Head of caudate nucleus (tissue), 42 donors: ENCODE measurements at regions of chr18 and their contacts with region 1.

Region 1: GRCh38 chr18:54119524-54120019 is 104.9 kb downstream of the MBD2 start:
- DNase-seq: peak in 23 of 42 donors; percentile 3 to 71 (median 35)

Region 2: DNA sequence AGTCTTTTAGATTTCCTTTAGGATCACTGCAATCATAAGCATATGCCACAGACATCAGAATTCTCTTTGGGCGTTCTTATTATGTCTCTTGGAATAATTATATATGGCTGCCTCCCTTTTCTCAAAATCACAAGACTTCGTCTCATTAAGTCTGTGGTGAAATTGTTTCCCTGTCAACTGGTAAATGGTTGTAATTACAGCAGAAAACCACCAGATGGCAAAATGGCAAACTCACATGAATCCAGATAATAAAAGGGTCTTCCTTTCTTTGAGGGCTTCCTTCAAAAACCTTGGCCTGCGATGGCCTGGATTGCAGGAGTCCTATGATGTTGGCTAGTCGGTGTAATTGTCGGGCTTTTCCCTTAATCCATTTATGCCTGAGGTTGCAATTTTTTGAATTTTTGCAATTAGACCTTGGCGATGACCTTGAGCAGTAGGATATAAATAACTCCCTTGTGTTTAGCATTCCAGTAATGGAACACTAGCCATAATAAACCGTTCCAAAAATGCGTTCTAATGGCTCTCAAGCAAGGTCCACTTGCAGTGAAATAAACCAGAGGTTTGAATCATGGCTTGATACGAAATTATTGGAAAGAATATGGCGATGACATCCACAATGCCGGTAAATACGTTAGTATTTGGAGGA is 551.5 kb before region 1 on chr18:
- intact Hi-C with region 1: loop called (anchors 10 kb)
- DNase-seq: peak in 11 of 42 donors; percentile 2 to 53 (median 9)

Region 3: GRCh38 chr18:53698907-53699306 is 420.7 kb before region 1 on chr18:
- intact Hi-C with region 1: loop called (anchors 10 kb)
- DNase-seq: peak in 40 of 42 donors; percentile 15 to 82 (median 51)

Region 4: DNA sequence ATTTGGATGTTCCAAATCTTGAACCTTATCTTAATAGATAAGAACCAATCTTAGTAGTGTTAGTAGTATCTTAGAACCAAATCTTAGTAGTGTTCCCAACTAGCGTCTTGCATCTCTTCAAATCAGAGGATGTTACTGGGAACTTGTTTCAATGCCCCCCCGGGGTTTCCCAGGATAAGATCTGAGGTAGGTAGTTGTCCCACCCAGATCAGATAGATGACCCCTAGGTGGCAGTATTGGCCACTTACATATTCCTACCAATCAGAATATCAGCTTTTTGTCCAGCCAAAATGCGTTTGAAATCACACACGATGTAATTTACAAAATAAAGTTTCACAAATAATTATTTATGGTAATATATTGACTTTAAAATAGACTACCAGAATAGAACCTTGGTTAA is 209.9 kb before region 1 on chr18:
- intact Hi-C with region 1: no loop called
- DNase-seq: peak in 1 of 42 donors; percentile 5